B cell (primary cell): ENCODE measurements at regions of chr19 and their contacts with region 1.

Region 1: GRCh38 chr19:54937926-54938325 is 9.4 kb downstream of the NLRP7 start:
- DNase-seq: peak; percentile 61
- ATAC-seq: peak; percentile 31
- H3K4me3 ChIP-seq: no peak overlapping the region
- H3K4me3 Mint-ChIP-seq: peak overlapping the region; percentile 0
- H3K27ac ChIP-seq: no peak overlapping the region
- H3K27ac Mint-ChIP-seq: peak overlapping the region; percentile 3
- H3K4me1 ChIP-seq: peaks cover 5 to 17% of the 10 kb centered on the region in 2 donors
- H3K4me1 Mint-ChIP-seq: peaks cover 8% of the 10 kb centered on the region
- H3K27me3 ChIP-seq: peaks cover 0 to 15% (median 0%) of the 10 kb centered on the region in 4 experiments
- H3K27me3 Mint-ChIP-seq: peaks cover 12% of the 10 kb centered on the region
- CTCF ChIP-seq: no peak

Region 2: DNA sequence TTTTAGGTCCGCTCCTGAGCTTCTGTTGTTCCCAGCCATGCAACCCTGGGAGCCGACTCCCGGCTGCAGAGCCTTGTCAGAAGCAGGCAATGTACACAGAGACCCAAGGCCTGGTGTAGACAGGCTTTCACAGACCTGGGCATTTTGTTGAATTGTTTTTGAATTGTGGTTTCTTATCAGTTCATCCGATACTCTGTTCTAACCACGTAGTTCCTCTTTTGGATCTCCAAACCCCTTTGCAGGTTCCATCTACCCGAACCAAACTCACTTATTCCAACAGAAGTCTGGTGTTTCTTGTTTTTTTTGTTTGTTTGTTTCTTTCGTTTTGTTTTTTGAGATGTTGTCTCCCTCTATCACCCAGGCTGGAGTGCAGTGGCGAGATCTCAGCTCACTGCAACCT is 21.9 kb after region 1 on chr19:
- CTCF ChIA-PET with region 1: no interaction called
- POLR2A ChIA-PET with region 1: interaction called, 6 read pairs
- intact Hi-C with region 1: loop called (anchors 1 kb)
- DNase-seq: peak; percentile 69
- ATAC-seq: peak; percentile 70
- H3K4me3 ChIP-seq: peak overlapping the region in 2 of 5 experiments; percentile 9 to 57
- H3K4me3 Mint-ChIP-seq: peak overlapping the region; percentile 86
- H3K27ac ChIP-seq: no peak overlapping the region
- H3K27ac Mint-ChIP-seq: peak overlapping the region; percentile 73
- H3K4me1 ChIP-seq: peaks cover 21 to 26% of the 10 kb centered on the region in 2 donors
- H3K4me1 Mint-ChIP-seq: peaks cover 17% of the 10 kb centered on the region
- H3K27me3 ChIP-seq: no peaks in the 10 kb centered on the region
- H3K27me3 Mint-ChIP-seq: no peaks in the 10 kb centered on the region
- CTCF ChIP-seq: no peak